ENCODE measurements at regions of chr1 and their contacts with region 1.

Region 1: DNA sequence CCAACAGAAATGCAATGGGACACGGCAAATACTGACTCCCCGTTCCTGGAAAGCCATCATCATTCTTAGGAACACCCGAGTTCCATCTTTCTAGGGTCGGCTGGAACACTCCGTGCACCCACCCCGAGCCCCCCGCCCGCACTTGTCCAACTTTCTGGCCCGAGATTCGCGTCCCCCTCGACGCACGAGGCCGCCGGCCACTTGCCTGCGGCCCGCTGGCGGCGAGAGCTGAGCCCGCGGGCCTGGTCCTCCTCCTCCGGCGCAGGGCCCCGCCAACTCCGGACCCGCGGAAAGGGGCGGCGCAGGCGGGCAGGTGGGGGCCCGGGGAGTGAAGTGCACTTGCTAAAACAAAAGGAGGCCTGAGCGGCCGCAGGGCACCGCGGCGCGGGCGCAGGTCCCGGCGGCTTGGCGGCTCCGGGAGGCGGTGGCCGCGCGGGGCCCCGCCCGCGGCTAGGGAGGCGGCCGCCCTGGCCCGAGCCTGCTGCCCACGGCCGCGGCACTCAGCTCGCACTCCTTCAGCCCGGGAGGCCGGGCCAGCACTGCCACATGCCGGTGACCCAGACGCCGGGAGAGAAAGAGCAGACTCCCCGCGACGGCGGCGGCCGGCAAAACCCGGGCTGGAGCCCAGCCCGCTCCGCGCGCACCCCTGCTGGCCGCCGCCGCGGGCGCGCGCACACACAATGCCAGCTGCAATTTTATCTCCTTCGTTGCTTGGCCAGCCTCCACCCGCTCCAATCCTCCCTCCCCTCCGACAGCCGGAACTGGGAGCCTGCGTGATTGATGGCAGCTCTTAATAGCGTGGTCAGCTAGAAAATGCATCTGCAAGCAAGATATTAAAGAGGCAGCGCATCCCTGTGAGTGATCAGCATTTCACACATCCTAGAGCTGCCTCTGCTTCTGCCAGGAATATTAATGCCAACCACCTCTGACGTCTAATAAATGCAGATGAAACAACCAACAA is 114.3 kb downstream of the RERE start:
- DNase-seq: peak; percentile 85
- ATAC-seq: peak; percentile 45
- H3K4me3 Mint-ChIP-seq: peak overlapping the region; percentile 83
- H3K27ac Mint-ChIP-seq: peak overlapping the region; percentile 76
- H3K4me1 Mint-ChIP-seq: peaks cover 32% of the 10 kb centered on the region
- H3K27me3 Mint-ChIP-seq: peaks cover 31% of the 10 kb centered on the region

Region 2: GRCh38 chr1:8211589-8212442 is 491.3 kb before region 1 on chr1:
- CTCF ChIA-PET with region 1: no interaction called
- POLR2A ChIA-PET with region 1: no interaction called
- intact Hi-C with region 1: no loop called
- DNase-seq: peak; percentile 44
- ATAC-seq: peak; percentile 66
- H3K4me3 Mint-ChIP-seq: peak overlapping the region; percentile 3
- H3K27ac Mint-ChIP-seq: peak overlapping the region; percentile 51
- H3K4me1 Mint-ChIP-seq: peaks cover 15% of the 10 kb centered on the region
- H3K27me3 Mint-ChIP-seq: peaks cover 31% of the 10 kb centered on the region

Region 3: GRCh38 chr1:8423650-8424538 is 279.2 kb before region 1 on chr1:
- CTCF ChIA-PET with region 1: no interaction called
- POLR2A ChIA-PET with region 1: interaction called, 4 read pairs
- intact Hi-C with region 1: loop called (anchors 2 to 5 kb)
- DNase-seq: peak; percentile 77
- ATAC-seq: peak; percentile 66
- H3K4me3 Mint-ChIP-seq: peak overlapping the region; percentile 84
- H3K27ac Mint-ChIP-seq: peak overlapping the region; percentile 97
- H3K4me1 Mint-ChIP-seq: peaks cover 42% of the 10 kb centered on the region
- H3K27me3 Mint-ChIP-seq: no peaks in the 10 kb centered on the region

Region 4: GRCh38 chr1:8649027-8649426 is 54.1 kb before region 1 on chr1:
- CTCF ChIA-PET with region 1: interaction called, 4 read pairs
- POLR2A ChIA-PET with region 1: interaction called, 4 read pairs
- intact Hi-C with region 1: loop called in 1 of 2 experiments (anchors 2 kb)
- DNase-seq: peak; percentile 22
- ATAC-seq: peak; percentile 85
- H3K4me3 Mint-ChIP-seq: no peak overlapping the region
- H3K27ac Mint-ChIP-seq: peak overlapping the region; percentile 37
- H3K4me1 Mint-ChIP-seq: peaks cover 50% of the 10 kb centered on the region
- H3K27me3 Mint-ChIP-seq: no peaks in the 10 kb centered on the region

Region 5: DNA sequence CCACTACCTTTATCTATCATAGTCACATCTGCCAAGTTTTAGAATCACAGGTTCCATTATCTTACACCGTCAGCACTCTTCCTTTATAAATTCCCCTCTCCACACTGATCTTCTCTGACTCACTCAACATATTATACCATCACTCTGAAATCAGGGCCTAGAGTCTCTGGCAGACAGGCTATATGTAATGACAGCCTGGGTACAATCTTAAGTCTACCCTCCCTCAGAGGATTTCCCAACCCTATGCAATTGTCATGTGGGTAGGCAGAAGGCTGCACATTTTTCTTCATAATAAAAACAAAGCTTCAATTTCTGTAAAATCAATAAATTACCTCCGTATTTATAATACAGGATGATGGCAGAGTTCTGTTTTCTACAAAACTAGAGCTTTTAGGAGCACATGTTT is 23.7 kb before region 1 on chr1:
- CTCF ChIA-PET with region 1: interaction called, 6 read pairs
- POLR2A ChIA-PET with region 1: no interaction called
- intact Hi-C with region 1: loop called (anchors 2 kb)
- DNase-seq: no peak
- ATAC-seq: peak; percentile 95
- H3K4me3 Mint-ChIP-seq: no peak overlapping the region
- H3K27ac Mint-ChIP-seq: no peak overlapping the region
- H3K4me1 Mint-ChIP-seq: peaks cover 33% of the 10 kb centered on the region
- H3K27me3 Mint-ChIP-seq: no peaks in the 10 kb centered on the region

Region 6: GRCh38 chr1:8903908-8904650 is 200.9 kb after region 1 on chr1:
- CTCF ChIA-PET with region 1: no interaction called
- POLR2A ChIA-PET with region 1: no interaction called
- intact Hi-C with region 1: loop called in 1 of 2 experiments (anchors 5 kb)
- DNase-seq: no peak
- ATAC-seq: no peak
- H3K4me3 Mint-ChIP-seq: no peak overlapping the region
- H3K27ac Mint-ChIP-seq: peak overlapping the region; percentile 48
- H3K4me1 Mint-ChIP-seq: peaks cover 46% of the 10 kb centered on the region
- H3K27me3 Mint-ChIP-seq: no peaks in the 10 kb centered on the region